Transverse colon (tissue), 4 donors: ENCODE measurements at regions of chr1 and their contacts with region 1.

Region 1: GRCh38 chr1:205321164-205321958 is at the start of gene NUAK2:
- DNase-seq: peak; percentile 96
- H3K4me3 ChIP-seq: peak within 1 kb of the TSS; percentile 51 to 83 (median 63)
- H3K27ac ChIP-seq: peak within 1 kb of the TSS; percentile 84 to 93 (median 90)
- H3K4me1 ChIP-seq: peaks cover 23 to 52% (median 33%) of the 10 kb centered on the region in 4 donors
- H3K27me3 ChIP-seq: no peaks in the 10 kb centered on the region
- CTCF ChIP-seq: peak in 4 of 5 experiments; percentile 8 to 59 (median 34)
- EP300 ChIP-seq: no peak
- POLR2A ChIP-seq: peak; percentile 96
- total RNA-seq, gene NUAK2: 12.5 to 46.8 (median 24.4) TPM

Region 2: GRCh38 chr1:205255941-205256780 is 65.2 kb before region 1 on chr1:
- in situ Hi-C with region 1: no loop called
- intact Hi-C with region 1: no loop called
- DNase-seq: peak; percentile 93
- H3K4me3 ChIP-seq: no peak overlapping the region
- H3K27ac ChIP-seq: peak overlapping the region in 1 of 4 donors; percentile 22
- H3K4me1 ChIP-seq: peaks cover 0 to 16% (median 0%) of the 10 kb centered on the region in 4 donors
- H3K27me3 ChIP-seq: no peaks in the 10 kb centered on the region
- CTCF ChIP-seq: peak; percentile 94 to 99 (median 97)
- EP300 ChIP-seq: no peak
- POLR2A ChIP-seq: no peak

Region 3: DNA sequence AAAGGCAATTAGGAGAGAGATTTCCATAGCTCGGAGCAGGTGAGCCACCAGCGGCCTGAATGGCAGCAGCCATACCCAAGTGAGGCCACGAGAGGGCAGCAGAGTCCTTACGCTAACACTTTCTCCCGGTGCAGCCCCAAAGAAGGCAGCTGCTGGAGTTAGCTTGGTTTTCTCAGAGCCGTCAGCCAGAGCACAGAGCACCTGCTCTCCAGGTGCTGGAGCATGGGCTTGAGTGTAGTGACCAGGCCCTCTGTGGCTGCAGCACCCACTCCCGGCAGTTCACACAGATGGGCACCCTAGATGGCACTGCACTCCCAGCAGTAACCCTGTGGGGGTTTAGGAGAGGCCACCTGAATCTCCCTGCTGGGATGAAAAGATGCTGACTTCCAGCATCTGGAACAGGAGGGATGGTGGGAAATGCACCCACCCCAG is 47.8 kb before region 1 on chr1:
- in situ Hi-C with region 1: loop called (anchors 5 to 10 kb)
- intact Hi-C with region 1: loop called (anchors 1 kb)
- DNase-seq: peak; percentile 92
- H3K4me3 ChIP-seq: no peak overlapping the region
- H3K27ac ChIP-seq: peak overlapping the region in 3 of 4 donors; percentile 10 to 53 (median 11)
- H3K4me1 ChIP-seq: peaks cover 0 to 28% (median 18%) of the 10 kb centered on the region in 4 donors
- H3K27me3 ChIP-seq: no peaks in the 10 kb centered on the region
- CTCF ChIP-seq: peak; percentile 96 to 99 (median 98)
- EP300 ChIP-seq: no peak
- POLR2A ChIP-seq: no peak

Region 4: GRCh38 chr1:205344066-205344928 is 22.9 kb after region 1 on chr1:
- in situ Hi-C with region 1: no loop called
- intact Hi-C with region 1: no loop called
- DNase-seq: peak; percentile 45
- H3K4me3 ChIP-seq: peak overlapping the region; percentile 4 to 47 (median 25)
- H3K27ac ChIP-seq: no peak overlapping the region
- H3K4me1 ChIP-seq: peaks cover 10 to 16% (median 13%) of the 10 kb centered on the region in 4 donors
- H3K27me3 ChIP-seq: peaks cover 56% of the 10 kb centered on the region
- CTCF ChIP-seq: no peak
- EP300 ChIP-seq: no peak
- POLR2A ChIP-seq: no peak